Right ventricle myocardium inferior (tissue), 1 donor: ENCODE measurements at regions of chr6 and their contacts with region 1.

Region 1: DNA sequence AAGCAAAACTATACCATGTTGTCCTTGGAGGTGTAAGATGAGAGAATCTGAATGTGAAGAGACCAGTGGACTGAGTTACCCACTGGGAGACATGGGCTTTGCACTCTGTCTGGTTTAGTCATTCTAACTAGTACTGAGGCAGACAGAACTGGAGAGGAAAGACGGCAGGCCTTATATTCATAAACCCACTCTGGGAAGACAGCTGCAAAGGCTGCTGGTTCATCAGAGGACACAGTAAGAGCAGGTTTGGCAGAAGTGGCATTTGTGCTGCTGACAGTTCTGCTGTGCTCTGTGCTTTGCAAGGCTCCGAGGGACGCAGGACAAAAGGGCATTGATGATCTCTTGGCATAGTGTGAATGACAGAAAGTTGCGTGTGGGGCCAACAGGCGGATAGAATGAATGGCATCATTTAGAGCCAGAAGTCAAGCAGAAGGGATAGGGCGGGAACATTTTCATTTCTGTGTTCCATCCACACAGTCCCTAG is 142.3 kb upstream of the TENT5A start:
- DNase-seq: peak; percentile 75
- ATAC-seq: peak; percentile 96

Region 2: GRCh38 chr6:81859884-81860283 is 34.9 kb before region 1 on chr6:
- intact Hi-C with region 1: loop called (anchors 5 kb)
- DNase-seq: no peak
- ATAC-seq: peak; percentile 45